PC-3 (cell line): ENCODE measurements at regions of chr12 and their contacts with region 1.

Region 1: DNA sequence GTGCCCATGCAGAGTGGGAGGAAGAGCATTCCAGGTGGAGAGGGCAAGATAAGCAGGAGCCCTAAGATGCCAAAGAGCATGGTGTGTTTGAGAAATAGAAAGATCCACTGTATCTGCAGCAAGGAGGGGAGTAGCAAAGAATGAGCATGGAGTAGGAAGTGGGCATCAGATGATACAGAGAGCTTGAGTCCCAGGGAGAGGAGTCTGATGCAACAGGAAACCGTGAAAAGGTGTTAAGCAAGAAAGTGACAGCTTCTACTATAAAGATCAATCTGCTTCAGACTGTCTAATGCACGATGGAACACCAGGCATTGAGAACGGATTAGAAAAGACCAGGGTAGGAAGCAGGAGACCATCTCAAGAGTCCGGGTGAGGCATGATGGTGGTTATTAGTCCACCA is 12.3 kb upstream of the GPRC5D start:
- DNase-seq: no peak
- ATAC-seq: no peak
- H3K4me3 ChIP-seq: no peak overlapping the region
- H3K27ac ChIP-seq: no peak overlapping the region
- H3K4me1 ChIP-seq: no peaks in the 10 kb centered on the region
- H3K27me3 ChIP-seq: no peaks in the 10 kb centered on the region
- CTCF ChIP-seq: no peak

Region 2: GRCh38 chr12:12562585-12563261 is 401.5 kb before region 1 on chr12 and contains the start of gene DUSP16:
- CTCF ChIA-PET with region 1: no interaction called
- POLR2A ChIA-PET with region 1: no interaction called
- intact Hi-C with region 1: no loop called
- DNase-seq: peak; percentile 87
- ATAC-seq: peak; percentile 86
- H3K4me3 ChIP-seq: peak within 1 kb of the TSS; percentile 90
- H3K27ac ChIP-seq: peak within 1 kb of the TSS; percentile 98
- H3K4me1 ChIP-seq: peaks cover 23% of the 10 kb centered on the region
- H3K27me3 ChIP-seq: no peaks in the 10 kb centered on the region
- CTCF ChIP-seq: no peak
- total RNA-seq, gene DUSP16: 4.4 and 6.7 TPM in 2 replicates

Region 3: DNA sequence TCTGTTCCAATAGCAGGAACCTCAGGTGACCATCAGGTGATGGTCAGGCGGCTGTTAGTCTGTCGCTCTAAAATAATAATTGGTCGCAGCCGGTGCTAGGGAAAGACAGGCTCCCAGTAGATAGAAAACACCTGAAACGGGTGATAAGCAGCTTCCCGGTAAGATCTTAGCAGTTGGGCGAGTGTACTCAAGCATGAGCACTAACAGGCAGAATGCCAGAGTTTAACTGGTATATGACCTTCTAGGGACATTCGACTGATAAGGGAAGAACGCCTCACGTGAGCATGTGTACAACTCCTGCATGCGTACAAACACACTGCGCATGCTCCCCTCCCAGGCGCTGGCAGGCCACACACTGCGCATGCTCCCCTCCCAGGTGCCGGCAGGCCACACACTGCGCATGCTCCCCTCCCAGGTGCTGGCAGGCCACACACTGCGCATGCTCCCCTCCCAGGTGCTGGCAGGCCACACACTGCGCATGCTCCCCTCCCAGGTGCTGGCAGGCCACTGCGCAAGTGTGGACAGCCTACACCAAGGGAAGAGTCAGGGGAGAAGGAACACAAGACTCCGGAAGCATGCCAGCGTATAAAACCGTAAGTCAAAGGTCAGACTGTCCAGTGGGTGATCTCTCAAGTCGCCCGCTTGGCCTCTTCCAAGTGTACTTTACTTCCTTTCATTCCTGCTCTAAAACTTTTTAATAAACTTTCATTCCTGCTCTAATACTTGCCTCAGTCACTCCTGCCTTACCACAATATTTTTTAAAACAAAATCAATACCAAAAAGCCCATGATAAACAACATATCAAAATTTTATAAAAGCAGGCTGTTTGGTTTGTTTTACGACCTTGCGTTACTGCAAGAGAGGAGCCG is 36.8 kb before region 1 on chr12:
- CTCF ChIA-PET with region 1: no interaction called
- POLR2A ChIA-PET with region 1: no interaction called
- intact Hi-C with region 1: no loop called
- DNase-seq: no peak
- ATAC-seq: no peak
- H3K4me3 ChIP-seq: no peak overlapping the region
- H3K27ac ChIP-seq: no peak overlapping the region
- H3K4me1 ChIP-seq: no peaks in the 10 kb centered on the region
- H3K27me3 ChIP-seq: no peaks in the 10 kb centered on the region
- CTCF ChIP-seq: no peak

Region 4: DNA sequence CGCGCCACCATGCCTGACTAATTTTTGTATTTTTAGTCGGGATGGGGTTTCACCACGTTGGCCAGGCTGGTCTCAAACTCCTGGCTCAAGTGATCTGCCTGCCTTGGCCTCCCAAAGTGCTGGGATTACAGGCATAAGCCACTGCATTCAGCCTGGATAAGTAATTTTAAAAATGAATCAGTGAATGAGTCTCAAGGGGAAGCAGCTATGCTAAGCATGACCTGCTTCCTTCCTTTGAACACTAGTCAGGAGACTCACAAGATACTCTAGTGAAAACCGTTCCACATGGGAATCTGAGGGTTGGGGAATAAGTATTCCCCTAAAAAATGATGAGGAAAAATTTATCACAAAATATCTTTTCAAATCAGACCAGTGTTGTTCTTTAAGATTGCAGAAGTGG is 69.2 kb after region 1 on chr12:
- CTCF ChIA-PET with region 1: no interaction called
- POLR2A ChIA-PET with region 1: no interaction called
- intact Hi-C with region 1: no loop called
- DNase-seq: no peak
- ATAC-seq: no peak
- H3K4me3 ChIP-seq: no peak overlapping the region
- H3K27ac ChIP-seq: no peak overlapping the region
- H3K4me1 ChIP-seq: no peaks in the 10 kb centered on the region
- H3K27me3 ChIP-seq: no peaks in the 10 kb centered on the region
- CTCF ChIP-seq: no peak

Region 5: GRCh38 chr12:13603953-13604352 is 639.7 kb after region 1 on chr12:
- CTCF ChIA-PET with region 1: interaction called, 12 read pairs
- POLR2A ChIA-PET with region 1: no interaction called
- intact Hi-C with region 1: no loop called
- DNase-seq: no peak
- ATAC-seq: no peak
- H3K4me3 ChIP-seq: no peak overlapping the region
- H3K27ac ChIP-seq: no peak overlapping the region
- H3K4me1 ChIP-seq: no peaks in the 10 kb centered on the region
- H3K27me3 ChIP-seq: no peaks in the 10 kb centered on the region; the same call in 1 of the 2 replicates
- CTCF ChIP-seq: no peak